ENCODE measurements at regions of chr6 and their contacts with region 1.

Region 1: DNA sequence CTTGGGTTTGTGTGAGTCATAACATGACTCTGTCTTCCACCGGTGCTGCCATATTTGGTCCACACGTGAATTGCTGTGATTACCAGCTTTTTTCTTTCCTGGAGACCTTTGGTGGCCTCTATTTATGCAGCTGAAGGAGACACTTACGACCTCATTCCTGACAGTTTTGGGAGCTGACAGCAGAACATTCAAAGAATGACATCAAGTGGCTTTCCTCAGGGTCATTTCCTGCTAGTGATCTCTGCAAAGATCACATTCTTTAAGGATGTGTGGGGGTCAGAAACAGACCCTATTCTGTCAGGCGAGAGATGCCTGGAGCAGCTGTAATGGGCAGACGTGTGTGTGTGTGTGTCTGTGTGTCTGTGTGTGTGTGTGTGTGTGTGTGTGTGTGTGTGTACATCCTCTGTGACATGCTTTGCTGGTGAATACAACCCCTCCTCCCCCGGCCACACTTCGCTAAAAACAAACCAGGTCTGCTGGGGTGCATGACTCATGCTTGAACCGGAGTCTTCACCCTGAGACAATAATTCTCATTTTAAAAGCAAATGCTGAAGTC is 115.6 kb downstream of the TMEM170B start:
- DNase-seq: peak; percentile 14

Region 2: DNA sequence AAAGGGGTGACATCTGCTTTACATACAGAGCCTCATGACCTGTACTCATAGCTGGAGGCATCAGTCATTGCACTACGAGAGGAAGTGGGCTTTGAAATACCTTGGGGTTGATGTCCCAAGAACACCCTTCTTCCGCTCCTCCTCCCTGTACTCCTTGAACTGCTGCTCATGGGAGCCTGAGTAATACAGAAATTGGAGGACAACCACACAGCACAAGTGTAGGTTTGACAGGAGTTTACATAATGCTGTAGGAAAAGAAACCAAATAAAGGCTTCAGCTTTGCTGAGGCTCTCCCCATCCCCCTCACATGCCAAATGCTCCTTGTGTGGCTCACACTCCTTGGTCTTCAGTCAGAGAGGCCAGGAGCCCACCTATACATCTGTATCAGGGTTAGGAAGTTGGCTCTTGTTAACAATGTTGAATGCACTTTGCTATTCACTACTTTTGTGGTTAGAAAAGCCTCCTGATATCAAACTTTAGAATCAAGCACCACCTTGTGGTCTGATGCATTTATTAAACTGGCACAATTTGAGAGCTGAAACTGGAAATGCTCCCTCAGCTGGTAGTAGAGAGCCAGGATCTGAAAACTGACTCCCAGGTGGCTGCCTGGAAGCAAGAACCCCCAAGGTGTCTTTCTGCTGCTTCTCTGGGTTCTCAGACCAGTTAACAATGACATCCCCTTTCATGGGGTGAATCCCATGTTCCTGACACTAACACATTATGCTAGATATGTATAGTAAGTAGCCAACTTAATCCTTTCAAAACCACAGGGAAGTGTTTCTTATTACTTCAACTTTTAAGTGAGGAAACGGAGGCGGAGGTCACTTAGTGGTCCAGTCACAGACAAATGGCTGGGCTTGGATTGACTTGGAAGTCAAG is 580.8 kb after region 1 on chr6:
- in situ Hi-C with region 1: loop called (anchors 25 kb)
- DNase-seq: peak; percentile 69

Measured in KBM-7 (cell line).